K562 (cell line): ENCODE measurements at regions of chr7 and their contacts with region 1.

Region 1: DNA sequence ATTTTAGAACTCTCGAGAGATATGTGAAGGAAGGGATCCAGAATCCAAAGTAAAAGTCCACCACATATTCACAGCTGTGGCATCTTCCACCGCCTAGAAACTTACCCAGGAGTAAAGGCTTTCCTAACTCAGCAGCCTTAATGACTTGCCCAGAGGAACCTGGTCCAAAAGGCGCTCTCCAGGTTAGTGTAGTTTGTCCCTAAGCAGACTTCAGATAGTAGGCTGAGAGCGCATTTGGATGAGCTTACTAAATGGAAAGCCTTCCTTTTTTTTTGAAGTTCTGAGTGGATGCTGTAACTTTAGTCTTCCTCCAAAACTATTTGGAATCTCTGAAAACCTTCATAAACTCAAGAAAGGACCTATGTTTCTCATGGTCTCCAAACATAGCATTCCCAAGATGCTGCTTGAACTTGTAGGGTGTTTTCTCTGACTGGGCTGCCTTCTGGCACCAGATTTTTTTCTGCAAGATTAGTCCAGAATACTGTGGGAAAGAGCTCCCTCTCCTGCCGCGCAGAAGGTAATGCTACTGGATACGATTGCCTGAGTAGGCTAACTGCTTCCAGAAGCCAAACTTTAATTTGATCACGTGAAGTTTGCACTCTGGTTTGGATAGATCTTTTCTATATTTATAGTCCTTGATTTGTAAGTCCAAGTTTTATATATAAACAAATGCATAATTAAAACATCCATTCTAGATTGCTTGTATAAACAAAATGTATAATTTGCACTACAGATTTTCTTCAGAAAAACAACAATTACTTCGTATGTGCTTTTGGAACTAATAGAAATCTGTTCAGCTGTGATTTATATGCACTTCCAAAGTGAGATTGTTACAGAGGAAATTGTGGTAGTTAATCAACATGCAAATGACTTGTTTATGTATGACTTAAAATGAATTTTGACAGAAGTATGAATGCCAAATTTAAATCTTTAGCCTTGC is 19.6 kb upstream of the GPR37 start:
- DNase-seq: peak; percentile 57 to 70 (median 60)
- ATAC-seq: peak; percentile 90
- H3K4me3 ChIP-seq: no peak overlapping the region
- H3K27ac ChIP-seq: no peak overlapping the region
- H3K4me1 ChIP-seq: no peaks in the 10 kb centered on the region; a peak in 1 of 5 replicates
- H3K27me3 ChIP-seq: no peaks in the 10 kb centered on the region; a peak in 1 of 5 replicates
- CTCF ChIP-seq: peak; percentile 75 to 87 (median 85)
- EP300 ChIP-seq: no peak
- POLR2A ChIP-seq: no peak
- RAD21 ChIP-seq: peak; percentile 94 to 95

Region 2: DNA sequence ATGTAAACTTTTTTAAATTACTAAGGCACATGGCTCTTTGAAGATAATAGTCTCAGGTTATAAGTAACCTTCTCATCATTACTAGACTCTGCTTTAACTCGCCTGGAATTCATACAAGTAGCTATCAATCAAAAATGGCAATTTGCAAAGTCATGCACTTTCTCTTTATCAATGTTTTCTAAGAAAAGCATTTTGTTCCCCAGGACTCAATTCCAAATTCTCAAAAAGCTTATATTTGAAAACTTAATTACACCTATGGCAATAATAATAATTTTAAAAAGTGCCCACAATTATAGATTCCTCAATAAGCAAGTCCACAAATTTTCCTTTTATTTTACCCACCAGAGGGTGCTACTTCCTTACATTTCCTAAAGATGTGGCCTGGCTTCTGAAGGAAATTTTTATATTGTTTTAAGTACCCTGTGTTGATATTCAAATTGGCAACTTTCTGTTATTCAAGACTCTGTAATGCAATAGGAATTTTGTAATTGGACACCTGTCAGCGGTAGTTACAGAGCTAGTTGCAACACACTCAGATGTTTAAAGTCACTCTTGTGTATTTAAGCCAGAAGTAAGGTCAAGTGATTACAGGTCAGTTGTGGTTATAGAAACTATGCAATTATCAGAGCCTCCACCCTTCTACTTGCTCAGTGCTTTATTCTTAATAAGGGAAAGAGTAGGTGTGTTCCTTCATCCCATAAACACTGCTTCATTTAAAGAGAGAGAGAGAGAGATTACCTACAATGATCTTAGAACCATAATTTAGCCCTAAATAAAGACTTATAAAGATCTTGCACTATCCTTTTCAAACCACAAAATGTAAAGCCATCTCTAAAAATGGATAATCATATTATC is 987.2 kb before region 1 on chr7:
- CTCF ChIA-PET with region 1: interaction called, 3 read pairs
- POLR2A ChIA-PET with region 1: no interaction called
- in situ Hi-C with region 1: no loop called
- intact Hi-C with region 1: loop called (anchors 2 kb)
- DNase-seq: peak in 3 of 4 experiments; percentile 27 to 59 (median 28)
- ATAC-seq: peak; percentile 78
- H3K4me3 ChIP-seq: no peak overlapping the region
- H3K27ac ChIP-seq: no peak overlapping the region
- H3K4me1 ChIP-seq: peaks cover 0 to 13% of the 10 kb centered on the region in 2 experiments; a peak in 1 of 5 replicates
- H3K27me3 ChIP-seq: no peaks in the 10 kb centered on the region
- CTCF ChIP-seq: peak; percentile 42 to 80 (median 45); a peak in 4 of 6 replicates
- EP300 ChIP-seq: no peak
- POLR2A ChIP-seq: no peak
- RAD21 ChIP-seq: peak; percentile 87 to 91

Region 3: DNA sequence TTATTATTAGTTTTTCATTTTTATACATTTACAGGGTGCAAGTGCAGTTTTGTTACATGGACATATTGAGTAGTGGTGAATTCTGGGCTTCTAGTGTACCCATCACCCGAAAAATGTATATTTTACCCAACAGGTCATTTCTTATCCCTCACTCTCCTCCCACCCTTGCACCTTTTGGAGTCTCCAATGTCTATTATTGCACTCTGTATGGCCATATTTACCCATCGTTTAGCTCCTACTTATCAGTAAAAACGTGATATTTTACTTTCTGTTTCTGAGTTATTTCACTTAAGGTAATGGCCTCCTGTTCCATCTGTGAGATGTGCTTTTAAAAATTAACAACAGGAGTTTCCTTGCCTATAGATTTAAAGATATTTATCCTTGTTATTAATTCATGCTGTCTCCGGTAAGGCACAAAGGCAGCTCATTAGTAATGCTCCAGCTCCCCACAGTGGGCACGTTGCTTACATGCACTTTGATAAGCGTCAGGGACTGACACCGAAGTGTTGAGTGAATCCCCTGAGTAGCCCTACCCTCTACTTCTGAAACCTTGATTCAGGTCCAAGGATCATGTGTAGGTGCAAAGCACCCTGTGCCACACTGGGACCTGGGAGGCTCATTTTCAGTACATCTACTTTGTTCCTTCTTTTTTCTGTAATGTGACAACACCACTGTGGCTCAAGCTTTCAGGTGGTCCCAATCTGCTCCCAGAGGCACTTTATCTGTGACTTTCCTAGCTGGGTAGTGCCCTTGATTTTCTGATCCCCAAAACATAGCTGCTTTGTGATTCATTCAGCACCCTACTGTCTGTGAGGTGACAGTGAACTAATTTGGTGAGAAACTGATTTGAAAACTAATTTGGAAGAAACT is 912.9 kb before region 1 on chr7:
- CTCF ChIA-PET with region 1: no interaction called
- POLR2A ChIA-PET with region 1: no interaction called
- in situ Hi-C with region 1: no loop called
- intact Hi-C with region 1: loop called (anchors 5 kb)
- DNase-seq: peak in 2 of 4 experiments; percentile 45 to 67
- ATAC-seq: peak; percentile 95
- H3K4me3 ChIP-seq: no peak overlapping the region
- H3K27ac ChIP-seq: no peak overlapping the region
- H3K4me1 ChIP-seq: no peaks in the 10 kb centered on the region
- H3K27me3 ChIP-seq: peaks cover 0 to 9% of the 10 kb centered on the region in 2 experiments; a peak in 1 of 5 replicates
- CTCF ChIP-seq: peak; percentile 62 to 82 (median 79)
- EP300 ChIP-seq: no peak
- POLR2A ChIP-seq: no peak
- RAD21 ChIP-seq: peak; percentile 89 to 94

Region 4: GRCh38 chr7:124101173-124101768 is 683.9 kb before region 1 on chr7:
- CTCF ChIA-PET with region 1: no interaction called
- POLR2A ChIA-PET with region 1: no interaction called
- in situ Hi-C with region 1: no loop called
- intact Hi-C with region 1: loop called (anchors 1 kb)
- DNase-seq: peak; percentile 19 to 55 (median 40)
- ATAC-seq: no peak
- H3K4me3 ChIP-seq: no peak overlapping the region
- H3K27ac ChIP-seq: no peak overlapping the region
- H3K4me1 ChIP-seq: no peaks in the 10 kb centered on the region
- H3K27me3 ChIP-seq: no peaks in the 10 kb centered on the region
- CTCF ChIP-seq: peak in 2 of 3 experiments; percentile 42 to 46; a peak in 3 of 6 replicates
- EP300 ChIP-seq: no peak
- POLR2A ChIP-seq: no peak
- RAD21 ChIP-seq: peak; percentile 31 to 44

Region 5: DNA sequence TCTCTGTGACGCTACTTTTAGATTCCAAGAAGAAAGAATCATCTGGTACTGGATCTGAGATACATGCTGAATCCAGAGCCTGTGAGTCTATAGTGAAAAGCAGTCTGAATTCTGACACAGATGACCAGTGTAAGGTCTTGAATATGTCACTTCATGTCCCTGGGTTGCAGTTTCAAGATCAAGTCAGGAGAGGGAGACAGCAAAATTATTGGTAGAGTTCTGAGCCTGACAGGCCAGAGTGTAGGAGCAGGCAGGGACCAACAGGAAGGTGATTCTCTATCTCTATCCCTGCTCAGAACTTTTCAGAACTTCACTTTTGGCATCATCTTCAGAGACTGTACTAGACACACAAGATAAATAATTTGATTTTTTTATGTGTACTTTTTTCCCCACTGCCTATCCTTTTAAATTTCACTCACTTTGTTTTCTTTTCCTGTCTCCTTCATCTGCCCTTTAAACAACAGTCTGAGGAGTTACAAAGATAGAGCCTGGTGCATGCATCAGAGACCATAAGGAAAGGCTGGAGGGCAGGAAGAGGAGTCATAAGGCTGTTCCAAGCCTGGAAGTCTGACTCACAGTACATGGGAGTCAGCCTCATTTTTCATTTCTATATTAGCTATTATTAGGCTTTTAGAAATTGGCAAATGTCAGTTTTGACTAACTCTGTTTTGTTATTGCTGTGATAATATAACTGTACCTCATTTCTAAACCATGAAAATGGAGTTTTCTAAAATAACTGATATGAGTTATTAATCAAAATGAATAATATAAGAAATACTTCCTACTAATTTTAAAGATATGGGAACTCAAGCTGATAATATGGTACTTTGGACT is 632.1 kb before region 1 on chr7:
- CTCF ChIA-PET with region 1: interaction called, 5 read pairs
- POLR2A ChIA-PET with region 1: no interaction called
- in situ Hi-C with region 1: no loop called
- intact Hi-C with region 1: loop called (anchors 1 kb)
- DNase-seq: peak in 1 of 4 experiments; percentile 9
- ATAC-seq: no peak
- H3K4me3 ChIP-seq: no peak overlapping the region
- H3K27ac ChIP-seq: no peak overlapping the region
- H3K4me1 ChIP-seq: no peaks in the 10 kb centered on the region
- H3K27me3 ChIP-seq: no peaks in the 10 kb centered on the region
- CTCF ChIP-seq: no peak
- EP300 ChIP-seq: no peak
- POLR2A ChIP-seq: no peak
- RAD21 ChIP-seq: peak; percentile 50 to 78

Region 6: DNA sequence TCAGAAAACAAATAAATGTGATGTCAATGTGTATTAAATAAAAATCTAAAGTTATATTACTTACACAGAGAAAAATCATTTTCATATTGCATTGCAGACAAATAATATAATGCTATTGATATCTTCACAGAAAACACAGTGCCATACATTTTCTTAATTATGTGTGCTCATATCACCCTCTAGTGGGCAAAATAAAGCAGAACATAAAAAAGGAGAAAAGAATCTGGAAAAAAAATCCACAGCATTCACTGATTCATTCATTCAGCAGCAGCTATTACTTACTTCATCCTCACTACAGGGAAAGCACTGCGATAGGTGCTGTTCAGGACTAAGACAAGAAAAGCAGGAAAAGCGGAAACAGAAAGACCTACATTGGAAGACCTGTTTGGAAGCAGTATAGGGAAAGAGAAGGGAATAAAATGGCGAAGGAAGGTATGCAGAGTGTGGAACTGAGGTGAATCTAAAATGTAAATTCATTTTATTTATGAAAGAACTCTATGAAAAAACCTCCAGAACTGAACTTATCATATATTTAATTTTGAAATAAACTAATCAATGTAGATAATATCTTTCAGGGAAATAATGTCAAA is 71.2 kb after region 1 on chr7:
- CTCF ChIA-PET with region 1: interaction called, 5 read pairs
- POLR2A ChIA-PET with region 1: no interaction called
- in situ Hi-C with region 1: no loop called
- intact Hi-C with region 1: loop called (anchors 2 kb)
- DNase-seq: peak; percentile 26 to 52 (median 35)
- ATAC-seq: peak; percentile 87
- H3K4me3 ChIP-seq: no peak overlapping the region
- H3K27ac ChIP-seq: no peak overlapping the region
- H3K4me1 ChIP-seq: no peaks in the 10 kb centered on the region
- H3K27me3 ChIP-seq: no peaks in the 10 kb centered on the region
- CTCF ChIP-seq: peak; percentile 42 to 81 (median 61); a peak in 5 of 6 replicates
- EP300 ChIP-seq: no peak
- POLR2A ChIP-seq: no peak
- RAD21 ChIP-seq: peak; percentile 69 to 74

Region 7: GRCh38 chr7:125412890-125413665 is 627.9 kb after region 1 on chr7:
- CTCF ChIA-PET with region 1: no interaction called
- POLR2A ChIA-PET with region 1: no interaction called
- in situ Hi-C with region 1: no loop called
- intact Hi-C with region 1: no loop called
- DNase-seq: no peak
- ATAC-seq: no peak
- H3K4me3 ChIP-seq: no peak overlapping the region
- H3K27ac ChIP-seq: no peak overlapping the region
- H3K4me1 ChIP-seq: no peaks in the 10 kb centered on the region; a peak in 1 of 5 replicates
- H3K27me3 ChIP-seq: no peaks in the 10 kb centered on the region
- CTCF ChIP-seq: no peak
- EP300 ChIP-seq: no peak
- POLR2A ChIP-seq: no peak
- RAD21 ChIP-seq: no peak